Left ventricle myocardium superior (tissue), 1 donor: ENCODE measurements at regions of chr15 and their contacts with region 1.

Region 1: GRCh38 chr15:82862886-82863285 is 53.5 kb downstream of the WHAMM start:
- DNase-seq: no peak
- ATAC-seq: no peak

Region 2: DNA sequence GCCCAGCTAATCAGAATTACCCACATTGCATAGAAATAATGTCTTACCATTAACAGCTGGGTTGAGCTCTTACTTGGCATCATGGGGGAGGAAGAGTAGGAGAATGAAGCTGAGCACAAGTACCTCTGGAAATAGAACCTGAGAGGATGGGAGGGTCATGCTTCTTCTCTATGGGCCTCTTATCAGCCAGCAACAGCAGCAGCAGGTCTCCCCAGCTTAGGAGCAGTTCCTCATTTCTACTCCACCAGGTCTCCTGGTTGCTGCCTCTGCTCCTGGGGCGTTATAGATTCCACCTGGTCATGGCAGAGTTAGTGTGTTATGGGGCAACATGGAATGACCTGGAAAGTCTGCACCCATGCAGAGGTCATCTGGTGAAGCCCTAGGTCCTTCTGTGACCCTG is 60.4 kb before region 1 on chr15:
- intact Hi-C with region 1: no loop called
- DNase-seq: no peak
- ATAC-seq: no peak

Region 3: DNA sequence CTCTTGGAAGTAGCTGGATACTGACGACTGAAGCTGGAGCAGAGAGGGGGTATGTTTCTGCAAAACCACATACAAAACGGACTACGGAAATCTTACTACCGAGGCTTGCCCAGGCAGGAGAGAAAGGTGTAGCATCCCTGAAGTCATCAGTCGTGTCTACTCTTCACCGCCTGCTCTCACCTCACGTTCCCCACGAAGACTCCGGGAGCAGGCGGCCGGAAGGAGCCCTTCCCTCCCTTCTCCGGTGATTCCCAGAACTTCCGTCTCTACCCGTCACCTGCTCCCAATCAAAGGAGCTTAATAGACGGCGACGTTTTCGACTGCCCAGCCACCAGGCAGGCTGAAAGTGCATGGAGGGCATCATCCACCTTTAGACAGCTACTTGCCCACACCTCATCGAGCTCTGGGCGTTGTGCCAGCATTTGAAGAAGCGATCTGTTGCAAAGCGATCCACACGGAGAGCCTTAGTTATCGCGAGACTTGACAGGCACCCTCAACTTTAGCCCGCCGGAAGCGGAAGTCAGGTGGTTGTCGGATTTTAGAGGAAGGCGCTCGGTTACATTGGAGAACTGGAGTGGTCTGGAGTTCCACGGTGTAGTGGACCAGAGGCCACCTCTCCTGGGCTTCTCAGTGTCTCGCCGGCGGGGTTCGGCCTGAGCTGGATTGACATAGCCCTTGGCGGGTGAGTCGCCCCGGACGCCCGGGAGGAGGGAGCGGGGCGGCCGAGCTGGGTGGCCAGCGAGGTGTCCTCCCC is 123.0 kb after region 1 on chr15 and contains the start of gene RAMAC:
- intact Hi-C with region 1: loop called (anchors 10 kb)
- DNase-seq: peak; percentile 93
- ATAC-seq: peak; percentile 98
- total RNA-seq, gene RAMAC: 15.0 TPM